ENCODE measurements at regions of chr15 and their contacts with region 1.

Region 1: DNA sequence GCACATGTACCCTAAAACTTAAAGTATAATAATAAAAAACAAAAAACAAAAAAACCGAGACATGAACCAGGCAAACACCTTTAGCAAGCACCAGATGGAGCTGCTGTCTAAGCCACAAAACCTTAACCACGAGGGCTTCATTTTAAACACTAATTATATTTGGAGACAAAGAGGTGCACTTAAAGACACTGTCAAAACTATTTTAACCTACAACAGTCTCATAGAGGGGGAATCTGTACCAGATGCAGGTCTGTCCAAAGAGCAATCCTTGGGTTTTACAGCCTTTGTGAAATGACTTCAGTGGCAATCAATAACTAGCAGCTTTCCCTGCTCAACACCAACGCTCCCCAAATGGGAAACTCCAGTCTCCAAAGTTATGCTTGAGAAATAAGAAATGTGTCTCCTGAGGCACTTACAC is 115.7 kb upstream of the TSPAN3 start:
- DNase-seq: peak; percentile 39
- H3K4me3 Mint-ChIP-seq: no peak overlapping the region
- H3K27ac Mint-ChIP-seq: no peak overlapping the region
- H3K4me1 Mint-ChIP-seq: no peaks in the 10 kb centered on the region
- H3K27me3 Mint-ChIP-seq: no peaks in the 10 kb centered on the region
- CTCF ChIP-seq: peak; percentile 48

Region 2: DNA sequence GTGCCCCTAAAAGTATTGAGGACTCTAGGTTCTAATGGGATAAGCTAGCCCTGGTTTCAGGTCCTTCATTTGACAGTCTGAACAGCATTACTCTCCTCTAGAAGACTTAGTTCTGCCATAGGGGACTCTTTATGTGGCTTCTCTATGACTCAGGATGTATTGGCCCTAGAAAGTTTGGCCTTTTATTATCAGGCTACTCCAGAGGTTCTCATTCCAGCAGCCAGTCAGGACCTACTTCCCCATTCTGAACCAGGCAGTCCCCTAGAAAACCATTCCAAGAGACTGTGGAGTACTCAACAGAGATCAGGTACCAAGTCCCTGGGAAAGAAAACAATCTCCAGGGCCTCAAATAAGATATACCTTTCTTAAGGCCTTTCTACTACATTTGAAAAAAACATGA is 42.2 kb after region 1 on chr15:
- CTCF ChIA-PET with region 1: no interaction called
- POLR2A ChIA-PET with region 1: no interaction called
- intact Hi-C with region 1: no loop called
- DNase-seq: no peak
- H3K4me3 Mint-ChIP-seq: no peak overlapping the region
- H3K27ac Mint-ChIP-seq: no peak overlapping the region
- H3K4me1 Mint-ChIP-seq: no peaks in the 10 kb centered on the region
- H3K27me3 Mint-ChIP-seq: no peaks in the 10 kb centered on the region
- CTCF ChIP-seq: no peak

Region 3: GRCh38 chr15:77312523-77312922 is 125.9 kb after region 1 on chr15:
- CTCF ChIA-PET with region 1: no interaction called
- POLR2A ChIA-PET with region 1: no interaction called
- intact Hi-C with region 1: no loop called
- DNase-seq: peak; percentile 8
- H3K4me3 Mint-ChIP-seq: no peak overlapping the region
- H3K27ac Mint-ChIP-seq: peak overlapping the region; percentile 49
- H3K4me1 Mint-ChIP-seq: peaks cover 12% of the 10 kb centered on the region
- H3K27me3 Mint-ChIP-seq: no peaks in the 10 kb centered on the region
- CTCF ChIP-seq: no peak

Region 4: DNA sequence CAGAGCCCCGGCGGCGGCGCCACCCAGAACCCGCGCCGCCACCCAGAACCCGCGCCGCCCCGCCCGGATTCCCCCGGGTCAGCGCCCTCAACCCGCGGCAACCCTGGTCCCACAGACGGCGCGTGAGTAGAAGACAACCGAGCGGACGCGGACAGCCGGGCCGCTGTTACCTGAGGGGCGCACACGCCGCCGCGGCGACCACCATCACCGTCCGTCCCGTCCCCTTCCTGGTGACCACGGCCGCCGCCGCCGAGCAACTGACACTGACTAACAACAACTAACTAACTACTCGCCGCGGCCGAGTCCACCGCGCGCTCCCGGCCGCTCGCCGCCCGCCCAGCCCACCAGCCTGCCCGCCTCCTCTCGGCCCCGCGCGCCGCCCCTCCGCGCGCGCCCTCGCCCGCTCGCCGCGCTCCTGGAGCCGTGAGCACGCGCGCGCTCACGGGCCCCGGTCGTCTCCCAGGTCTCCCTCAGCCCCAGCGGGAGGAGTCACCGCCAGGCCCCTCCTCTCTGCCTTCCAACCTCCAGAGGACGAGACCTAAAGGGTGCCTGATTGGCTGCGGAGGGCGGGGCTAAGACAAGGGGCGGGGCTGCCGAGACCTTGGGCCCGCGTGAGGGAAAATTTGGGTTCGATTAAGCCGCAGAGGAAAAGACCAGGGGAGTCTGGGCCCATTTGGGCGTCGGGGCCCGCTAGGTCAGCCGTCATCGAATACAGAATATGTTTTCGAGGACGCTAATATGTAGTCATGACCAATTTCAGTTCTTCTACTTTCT is 233.4 kb after region 1 on chr15 and contains the start of gene PEAK1:
- CTCF ChIA-PET with region 1: interaction called, 3 read pairs
- POLR2A ChIA-PET with region 1: interaction called, 9 read pairs
- intact Hi-C with region 1: loop called (anchors 10 kb)
- DNase-seq: peak; percentile 99
- H3K4me3 Mint-ChIP-seq: peak within 1 kb of the TSS; percentile 89
- H3K27ac Mint-ChIP-seq: peak within 1 kb of the TSS; percentile 98
- H3K4me1 Mint-ChIP-seq: peaks cover 41% of the 10 kb centered on the region
- H3K27me3 Mint-ChIP-seq: no peaks in the 10 kb centered on the region
- CTCF ChIP-seq: no peak
- total RNA-seq, gene PEAK1: 17.5 and 20.0 TPM in 2 replicates